Activated B cell treated with CpG ODN at 0.5 μM for 24 hours (primary cell): ENCODE measurements at regions of chr2 and their contacts with region 1.

Region 1: DNA sequence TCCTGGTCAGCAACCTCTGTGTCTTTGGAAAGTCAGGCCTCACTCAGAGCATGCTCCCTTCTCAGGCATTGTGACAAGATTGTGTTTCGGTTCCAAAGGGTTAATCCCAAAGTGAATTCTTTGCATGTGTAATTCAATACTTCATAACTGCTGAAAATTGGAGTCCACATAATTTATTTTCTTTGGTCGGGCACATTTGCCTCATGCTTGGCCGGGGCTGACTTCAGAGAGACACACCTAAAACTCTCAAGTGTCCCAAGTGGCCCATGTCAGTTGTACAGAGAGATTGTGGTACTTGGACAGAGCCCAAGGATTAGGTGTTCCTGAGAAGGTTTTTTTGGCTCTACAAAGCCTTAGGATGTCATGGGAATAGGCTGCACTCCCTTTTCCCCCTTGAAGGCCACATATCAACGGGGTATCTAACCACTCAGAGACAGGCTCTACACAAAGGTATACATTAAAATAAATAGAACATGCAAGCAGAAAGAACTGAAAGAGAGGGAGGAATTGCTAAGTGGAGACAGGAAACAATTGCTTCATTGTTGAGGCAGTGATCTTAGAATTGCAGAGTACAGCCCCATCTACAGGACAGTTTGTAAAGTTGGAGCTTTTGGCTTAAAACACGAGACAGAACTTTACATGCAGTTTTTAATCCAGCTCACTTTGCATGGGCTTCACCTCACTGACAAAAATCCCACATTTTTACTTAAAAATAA is 1232.3 kb upstream of the ZEB2 start:
- DNase-seq: no peak
- ATAC-seq: peak; percentile 45
- H3K4me3 Mint-ChIP-seq: peak overlapping the region; percentile 37
- H3K27ac Mint-ChIP-seq: peak overlapping the region; percentile 77
- H3K4me1 Mint-ChIP-seq: peaks cover 64% of the 10 kb centered on the region
- H3K27me3 Mint-ChIP-seq: no peaks in the 10 kb centered on the region
- CTCF ChIP-seq: peak; percentile 73

Region 2: GRCh38 chr2:144183727-144184126 is 1568.5 kb before region 1 on chr2:
- CTCF ChIA-PET with region 1: no interaction called
- POLR2A ChIA-PET with region 1: no interaction called
- intact Hi-C with region 1: loop called (anchors 5 kb)
- DNase-seq: peak; percentile 35
- ATAC-seq: peak; percentile 96
- H3K4me3 Mint-ChIP-seq: peak overlapping the region; percentile 82
- H3K27ac Mint-ChIP-seq: peak overlapping the region; percentile 85
- H3K4me1 Mint-ChIP-seq: peaks cover 28% of the 10 kb centered on the region
- H3K27me3 Mint-ChIP-seq: no peaks in the 10 kb centered on the region
- CTCF ChIP-seq: no peak

Region 3: GRCh38 chr2:144516981-144517865 is 1235.0 kb before region 1 on chr2:
- CTCF ChIA-PET with region 1: interaction called, 4 read pairs
- POLR2A ChIA-PET with region 1: interaction called, 35 read pairs
- intact Hi-C with region 1: loop called (anchors 1 kb)
- DNase-seq: peak; percentile 67
- ATAC-seq: peak; percentile 58
- H3K4me3 Mint-ChIP-seq: no peak overlapping the region
- H3K27ac Mint-ChIP-seq: no peak overlapping the region
- H3K4me1 Mint-ChIP-seq: peaks cover 47% of the 10 kb centered on the region
- H3K27me3 Mint-ChIP-seq: no peaks in the 10 kb centered on the region
- CTCF ChIP-seq: no peak

Region 4: DNA sequence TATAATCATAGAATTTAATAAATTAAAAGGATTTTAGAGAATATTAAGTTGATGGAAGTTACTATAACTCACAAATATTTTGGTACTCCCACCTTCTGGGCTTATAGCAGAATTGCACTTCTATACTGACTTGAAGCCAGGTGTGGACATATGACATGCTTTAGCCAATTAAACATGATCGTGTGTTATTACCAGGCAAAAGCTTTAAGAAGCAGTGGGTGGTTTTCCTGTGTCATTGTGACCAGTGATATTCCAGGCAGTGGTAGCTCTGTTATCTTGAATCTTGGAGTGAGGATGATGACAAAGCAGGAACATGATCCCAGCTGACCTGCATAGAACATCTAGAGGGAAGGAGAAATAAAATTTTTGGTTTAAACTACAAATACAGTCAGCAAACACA is 861.4 kb before region 1 on chr2:
- CTCF ChIA-PET with region 1: interaction called, 4 read pairs
- POLR2A ChIA-PET with region 1: no interaction called
- intact Hi-C with region 1: loop called (anchors 2 kb)
- DNase-seq: no peak
- ATAC-seq: peak; percentile 88
- H3K4me3 Mint-ChIP-seq: no peak overlapping the region
- H3K27ac Mint-ChIP-seq: no peak overlapping the region
- H3K4me1 Mint-ChIP-seq: peaks cover 3% of the 10 kb centered on the region
- H3K27me3 Mint-ChIP-seq: no peaks in the 10 kb centered on the region
- CTCF ChIP-seq: no peak

Region 5: DNA sequence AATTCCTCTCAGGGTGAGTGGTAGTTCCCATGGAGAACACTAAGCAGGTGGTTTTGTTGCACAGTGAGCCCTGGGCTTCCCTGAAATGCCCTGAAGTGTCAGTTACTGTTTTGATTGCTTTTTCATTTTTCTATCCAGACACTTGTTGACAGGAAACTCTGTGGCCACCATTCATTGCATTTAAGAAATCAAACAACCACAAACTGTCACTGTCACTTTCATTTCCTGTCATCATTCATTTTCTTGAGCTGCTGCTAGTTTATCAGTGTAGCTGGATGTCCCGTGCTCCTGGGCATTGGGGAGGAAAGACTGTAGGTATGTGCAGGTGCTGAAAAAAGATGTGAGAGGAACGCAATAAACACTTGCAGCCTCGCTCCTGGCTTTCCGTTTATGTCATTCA is 340.8 kb before region 1 on chr2:
- CTCF ChIA-PET with region 1: interaction called, 6 read pairs
- POLR2A ChIA-PET with region 1: interaction called, 3 read pairs
- intact Hi-C with region 1: loop called (anchors 2 kb)
- DNase-seq: no peak
- ATAC-seq: peak; percentile 82
- H3K4me3 Mint-ChIP-seq: peak overlapping the region; percentile 74
- H3K27ac Mint-ChIP-seq: peak overlapping the region; percentile 65
- H3K4me1 Mint-ChIP-seq: peaks cover 35% of the 10 kb centered on the region
- H3K27me3 Mint-ChIP-seq: peaks cover 3% of the 10 kb centered on the region
- CTCF ChIP-seq: no peak

Region 6: DNA sequence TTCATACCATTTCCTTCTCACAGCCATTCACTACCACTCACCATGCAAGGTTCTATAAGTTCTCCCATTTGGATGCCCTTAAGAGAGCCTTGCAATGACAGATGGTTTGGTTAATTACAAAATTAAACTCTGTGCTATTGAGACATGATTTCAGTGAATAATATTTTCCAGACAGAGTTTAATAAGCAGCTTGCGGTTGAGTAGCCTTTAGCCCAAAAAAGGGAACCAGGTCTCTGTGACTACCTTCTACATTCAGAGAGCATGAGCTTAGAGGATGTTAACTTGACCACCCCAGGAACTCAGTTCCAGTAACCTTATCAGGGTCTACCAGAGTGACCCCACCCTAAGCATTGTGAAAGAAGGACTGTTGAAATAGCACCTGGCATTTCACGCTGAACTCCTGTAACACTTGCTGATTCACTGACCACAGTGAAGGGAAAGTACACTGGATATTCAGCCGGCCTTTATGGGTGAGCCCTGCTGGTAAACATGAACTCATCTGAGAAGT is 59.2 kb before region 1 on chr2:
- CTCF ChIA-PET with region 1: interaction called, 8 read pairs
- POLR2A ChIA-PET with region 1: interaction called, 29 read pairs
- intact Hi-C with region 1: loop called (anchors 1 kb)
- DNase-seq: no peak
- ATAC-seq: peak; percentile 86
- H3K4me3 Mint-ChIP-seq: peak overlapping the region; percentile 71
- H3K27ac Mint-ChIP-seq: peak overlapping the region; percentile 89
- H3K4me1 Mint-ChIP-seq: peaks cover 55% of the 10 kb centered on the region
- H3K27me3 Mint-ChIP-seq: no peaks in the 10 kb centered on the region
- CTCF ChIP-seq: no peak

Region 7: DNA sequence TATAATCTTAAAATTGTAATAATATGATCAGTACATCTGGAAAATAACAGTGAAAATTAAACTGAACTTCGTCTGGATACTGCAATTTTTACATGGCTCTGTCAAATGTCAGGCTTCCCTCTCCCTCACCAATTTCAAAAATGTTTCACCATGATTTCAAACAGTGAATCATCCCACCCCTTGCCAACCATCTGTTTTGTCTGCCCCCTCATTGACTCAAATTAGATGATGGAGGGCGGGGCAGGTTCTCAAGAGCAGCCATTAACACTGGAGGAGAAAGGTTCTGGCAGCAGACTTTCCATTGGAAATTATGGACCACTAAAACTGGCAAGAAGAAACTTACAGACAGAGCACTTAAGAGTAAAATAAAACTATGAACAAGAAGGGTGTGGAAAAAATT is 36.6 kb before region 1 on chr2:
- CTCF ChIA-PET with region 1: no interaction called
- POLR2A ChIA-PET with region 1: no interaction called
- intact Hi-C with region 1: no loop called
- DNase-seq: no peak
- ATAC-seq: no peak
- H3K4me3 Mint-ChIP-seq: no peak overlapping the region
- H3K27ac Mint-ChIP-seq: no peak overlapping the region
- H3K4me1 Mint-ChIP-seq: no peaks in the 10 kb centered on the region
- H3K27me3 Mint-ChIP-seq: no peaks in the 10 kb centered on the region
- CTCF ChIP-seq: no peak